Dendritic cell treated with granulocyte-macrophage colony-stimulating factor and Interleukin-4, amounts not matched to agents 40 ng/mL and 50 ng/mL, for 4 days (primary cell): ENCODE measurements at regions of chr2 and their contacts with region 1.

Region 1: GRCh38 chr2:76197842-76198448 is 487.2 kb upstream of the GCFC2 start:
- H3K4me3 Mint-ChIP-seq: no peak overlapping the region
- H3K27ac Mint-ChIP-seq: no peak overlapping the region
- H3K4me1 Mint-ChIP-seq: no peaks in the 10 kb centered on the region
- H3K27me3 Mint-ChIP-seq: no peaks in the 10 kb centered on the region

Region 2: DNA sequence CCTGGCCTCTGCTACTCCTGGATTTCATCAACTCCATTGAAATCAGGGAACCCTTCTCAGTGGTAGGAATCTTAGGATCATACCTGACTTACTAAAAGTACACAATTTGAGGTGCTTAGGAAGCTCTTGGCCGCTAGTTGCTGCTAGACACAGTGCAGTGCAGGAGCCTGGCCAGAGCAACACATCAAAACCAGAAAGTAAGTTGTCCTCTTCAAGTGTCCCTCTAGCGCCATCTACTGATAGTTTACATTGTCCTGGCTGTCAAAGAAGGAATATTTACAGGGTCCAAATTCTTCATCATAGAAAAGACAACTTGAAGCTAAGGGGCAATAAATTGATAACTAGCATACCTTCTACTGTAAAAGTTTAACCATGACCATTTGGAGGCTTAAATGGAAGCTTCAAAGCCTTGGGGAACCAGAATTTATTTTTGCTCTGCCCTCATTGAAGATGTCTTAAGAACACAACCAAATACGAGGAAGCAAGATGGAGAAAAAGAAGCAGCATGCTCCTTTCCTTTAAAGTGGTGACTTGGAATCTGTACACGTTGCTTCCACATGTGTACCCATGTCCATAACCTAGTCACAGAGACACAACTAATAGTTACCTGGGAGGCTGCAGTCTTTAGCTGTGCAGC is 401.9 kb after region 1 on chr2:
- intact Hi-C with region 1: loop called (anchors 10 kb)
- H3K4me3 Mint-ChIP-seq: no peak overlapping the region
- H3K27ac Mint-ChIP-seq: no peak overlapping the region
- H3K4me1 Mint-ChIP-seq: no peaks in the 10 kb centered on the region
- H3K27me3 Mint-ChIP-seq: no peaks in the 10 kb centered on the region